Activated CD4-positive, alpha-beta T cell treated with anti-CD3 and anti-CD28 coated beads for 36 hours (primary cell): ENCODE measurements at regions of chr1 and their contacts with region 1.

Region 1: DNA sequence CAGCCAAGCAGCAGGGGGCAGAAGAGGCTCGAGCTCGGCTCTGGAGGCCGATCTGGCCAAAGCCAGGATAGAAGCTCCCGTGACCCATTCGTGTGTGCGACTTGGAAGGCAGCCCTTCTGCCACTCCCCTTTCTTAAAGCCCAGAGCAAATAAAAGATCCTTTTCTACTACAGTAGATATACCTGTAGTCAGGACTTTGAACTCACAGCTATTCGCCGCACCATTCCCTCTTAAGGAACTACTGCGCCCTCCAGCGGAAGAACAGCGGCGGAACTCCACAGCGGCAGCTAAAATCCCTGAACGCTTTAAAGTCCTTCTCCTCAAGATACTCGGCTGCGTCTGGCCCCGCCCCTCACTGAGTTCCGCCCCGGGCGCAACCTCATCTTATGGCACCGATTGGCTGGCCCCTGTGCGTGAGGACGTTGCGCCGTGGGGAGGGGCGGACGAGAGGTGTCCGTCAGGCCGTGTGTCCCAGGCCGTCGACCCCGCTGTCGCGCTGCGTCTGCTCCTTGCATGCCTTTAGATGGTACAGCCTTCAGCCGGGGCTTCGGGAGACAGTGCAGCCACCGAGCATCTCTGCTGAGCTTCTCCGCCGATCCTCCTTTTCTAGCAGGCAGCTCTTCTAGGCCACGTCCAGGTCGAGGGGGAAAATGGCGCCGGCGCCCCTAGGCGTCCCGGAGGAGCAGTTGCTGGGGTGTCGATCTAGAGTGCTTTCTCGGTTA is at the start of gene LRIG2:
- DNase-seq: peak; percentile 99
- ATAC-seq: peak; percentile 98
- H3K4me3 Mint-ChIP-seq: peak within 1 kb of the TSS; percentile 98
- H3K27ac Mint-ChIP-seq: peak within 1 kb of the TSS; percentile 90
- H3K4me1 Mint-ChIP-seq: peaks cover 29% of the 10 kb centered on the region
- H3K27me3 Mint-ChIP-seq: no peaks in the 10 kb centered on the region
- total RNA-seq, gene LRIG2: 7.1 to 10.2 TPM

Region 2: GRCh38 chr1:112674439-112674985 is 398.4 kb before region 1 on chr1 and contains the start of gene MOV10:
- CTCF ChIA-PET with region 1: interaction called, 4 read pairs
- POLR2A ChIA-PET with region 1: no interaction called
- intact Hi-C with region 1: loop called in 1 of 2 experiments (anchors 2 kb)
- DNase-seq: peak; percentile 77
- ATAC-seq: peak; percentile 83
- H3K4me3 Mint-ChIP-seq: peak within 1 kb of the TSS; percentile 88
- H3K27ac Mint-ChIP-seq: peak within 1 kb of the TSS; percentile 92
- H3K4me1 Mint-ChIP-seq: peaks cover 43% of the 10 kb centered on the region
- H3K27me3 Mint-ChIP-seq: no peaks in the 10 kb centered on the region
- total RNA-seq, gene MOV10: 80.3 to 87.5 TPM

Region 3: GRCh38 chr1:112904071-112904830 is 168.7 kb before region 1 on chr1:
- CTCF ChIA-PET with region 1: interaction called, 20 read pairs
- POLR2A ChIA-PET with region 1: no interaction called
- intact Hi-C with region 1: no loop called
- DNase-seq: peak; percentile 80
- ATAC-seq: peak; percentile 96
- H3K4me3 Mint-ChIP-seq: no peak overlapping the region
- H3K27ac Mint-ChIP-seq: peak overlapping the region; percentile 83
- H3K4me1 Mint-ChIP-seq: peaks cover 41% of the 10 kb centered on the region
- H3K27me3 Mint-ChIP-seq: no peaks in the 10 kb centered on the region

Region 4: GRCh38 chr1:113086541-113086940 is 13.6 kb after region 1 on chr1:
- CTCF ChIA-PET with region 1: interaction called, 21 read pairs
- POLR2A ChIA-PET with region 1: interaction called, 3 read pairs
- intact Hi-C with region 1: no loop called
- DNase-seq: no peak
- ATAC-seq: no peak
- H3K4me3 Mint-ChIP-seq: no peak overlapping the region
- H3K27ac Mint-ChIP-seq: no peak overlapping the region
- H3K4me1 Mint-ChIP-seq: peaks cover 17% of the 10 kb centered on the region
- H3K27me3 Mint-ChIP-seq: no peaks in the 10 kb centered on the region

Region 5: DNA sequence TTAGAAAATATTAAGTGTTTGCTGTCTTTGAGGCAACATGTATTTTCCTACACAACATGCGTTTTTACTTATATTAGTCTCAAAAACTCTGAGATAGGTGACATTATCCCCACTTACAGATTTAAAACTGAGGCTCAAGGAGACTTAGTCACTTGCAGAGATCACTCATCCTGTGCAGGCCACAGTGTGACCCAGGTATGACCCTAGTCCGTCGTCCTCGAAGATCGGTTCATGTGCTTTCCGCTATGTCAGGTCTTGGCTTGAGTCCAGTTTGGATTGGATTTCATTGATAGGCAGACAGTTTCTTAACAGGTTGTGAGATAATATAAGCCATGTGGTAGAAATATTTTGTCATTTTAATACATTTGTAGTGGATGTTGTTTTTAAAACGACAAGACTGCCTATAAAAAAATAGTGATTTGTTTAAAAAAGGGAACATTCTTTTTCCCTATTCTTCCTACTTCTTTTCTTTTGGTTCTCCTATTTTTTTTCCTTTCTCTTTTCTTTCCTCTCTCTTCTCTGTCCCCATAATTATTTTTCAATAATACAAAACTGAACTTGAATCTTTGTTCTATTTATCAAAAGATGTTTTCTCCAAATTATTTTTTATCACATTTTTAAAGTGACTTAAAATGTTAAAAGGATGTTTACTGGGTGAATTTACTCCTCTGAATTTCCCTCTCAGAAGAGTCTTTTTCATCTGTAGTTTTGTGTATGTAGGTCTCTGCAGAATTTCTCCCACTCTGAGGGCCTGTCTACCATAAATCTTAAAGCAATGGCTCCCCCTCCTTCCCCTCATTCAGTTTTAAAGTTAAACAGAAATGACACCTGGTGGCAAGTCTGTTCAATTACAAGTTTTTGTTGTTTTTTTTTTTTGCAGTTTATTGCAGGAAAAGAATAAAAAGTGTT is 604.6 kb after region 1 on chr1:
- CTCF ChIA-PET with region 1: interaction called, 5 read pairs
- POLR2A ChIA-PET with region 1: no interaction called
- intact Hi-C with region 1: loop called (anchors 2 kb)
- DNase-seq: no peak
- ATAC-seq: peak; percentile 39
- H3K4me3 Mint-ChIP-seq: no peak overlapping the region
- H3K27ac Mint-ChIP-seq: no peak overlapping the region
- H3K4me1 Mint-ChIP-seq: no peaks in the 10 kb centered on the region
- H3K27me3 Mint-ChIP-seq: no peaks in the 10 kb centered on the region